ENCODE measurements at regions of chr19 and their contacts with region 1.

Region 1: GRCh38 chr19:38849860-38850435 is at the start of gene HNRNPL:
- DNase-seq: peak; percentile 100
- ATAC-seq: peak; percentile 60
- H3K4me3 ChIP-seq: peak within 1 kb of the TSS; percentile 63 to 95 (median 83)
- H3K4me3 Mint-ChIP-seq: peak within 1 kb of the TSS; percentile 92
- H3K27ac ChIP-seq: peak within 1 kb of the TSS; percentile 82 to 98
- H3K27ac Mint-ChIP-seq: peak within 1 kb of the TSS; percentile 99
- H3K4me1 ChIP-seq: peaks cover 37 to 51% of the 10 kb centered on the region in 2 donors
- H3K4me1 Mint-ChIP-seq: peaks cover 56% of the 10 kb centered on the region
- H3K27me3 ChIP-seq: no peaks in the 10 kb centered on the region
- H3K27me3 Mint-ChIP-seq: no peaks in the 10 kb centered on the region
- CTCF ChIP-seq: peak; percentile 37
- total RNA-seq, gene HNRNPL: 397 and 418 TPM in 2 replicates

Region 2: DNA sequence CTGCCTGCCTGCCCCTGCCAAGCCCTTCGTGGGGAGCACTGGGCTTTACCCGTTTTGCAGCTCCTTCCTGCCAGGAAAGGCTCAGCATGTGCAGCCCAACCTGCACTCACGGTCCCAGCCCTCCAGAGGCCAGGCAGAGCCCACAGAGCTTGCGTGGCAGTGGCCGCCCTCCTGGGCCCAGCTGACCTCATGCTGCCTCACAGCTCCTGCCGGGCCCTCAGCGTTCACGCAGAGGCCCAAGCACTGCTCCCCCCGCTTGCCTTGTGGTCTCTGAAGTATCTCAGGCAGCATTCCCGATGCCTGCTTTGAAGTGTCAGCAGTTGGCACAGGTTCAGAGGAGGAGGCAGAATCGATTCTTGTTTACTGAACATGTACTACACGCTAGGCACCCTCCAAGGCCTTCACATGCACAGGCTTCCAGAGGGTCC is 138.2 kb before region 1 on chr19:
- CTCF ChIA-PET with region 1: no interaction called
- POLR2A ChIA-PET with region 1: no interaction called
- intact Hi-C with region 1: no loop called
- DNase-seq: no peak
- ATAC-seq: no peak
- H3K4me3 ChIP-seq: no peak overlapping the region
- H3K4me3 Mint-ChIP-seq: no peak overlapping the region
- H3K27ac ChIP-seq: no peak overlapping the region
- H3K27ac Mint-ChIP-seq: no peak overlapping the region
- H3K4me1 ChIP-seq: no peaks in the 10 kb centered on the region
- H3K4me1 Mint-ChIP-seq: no peaks in the 10 kb centered on the region
- H3K27me3 ChIP-seq: no peaks in the 10 kb centered on the region
- H3K27me3 Mint-ChIP-seq: no peaks in the 10 kb centered on the region
- CTCF ChIP-seq: no peak

Region 3: DNA sequence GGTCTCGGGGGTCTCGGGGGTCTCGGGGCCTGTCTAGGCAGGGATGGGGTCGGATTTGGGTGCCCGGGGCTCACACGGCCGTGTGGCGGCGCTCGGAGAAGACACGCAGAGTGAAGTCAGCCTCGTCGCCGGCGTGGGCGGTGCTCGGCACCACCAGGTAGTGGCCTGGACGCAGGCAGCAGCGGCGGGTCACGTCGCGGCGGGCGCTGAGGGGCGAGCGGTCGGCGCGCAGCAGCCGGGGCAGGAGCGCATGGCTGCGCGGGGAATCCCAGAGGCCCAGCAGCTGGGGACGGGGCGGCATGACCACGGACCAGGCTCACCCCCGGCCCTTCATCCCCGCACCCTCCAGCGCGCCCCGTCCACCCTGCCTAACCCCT is 113.9 kb before region 1 on chr19:
- CTCF ChIA-PET with region 1: no interaction called
- POLR2A ChIA-PET with region 1: interaction called, 14 read pairs
- intact Hi-C with region 1: loop called (anchors 1 kb)
- DNase-seq: peak; percentile 87
- ATAC-seq: peak; percentile 53
- H3K4me3 ChIP-seq: peak overlapping the region in 4 of 5 experiments; percentile 32 to 69 (median 58)
- H3K4me3 Mint-ChIP-seq: peak overlapping the region; percentile 79
- H3K27ac ChIP-seq: no peak overlapping the region
- H3K27ac Mint-ChIP-seq: peak overlapping the region; percentile 76
- H3K4me1 ChIP-seq: peaks cover 29 to 47% of the 10 kb centered on the region in 2 donors
- H3K4me1 Mint-ChIP-seq: peaks cover 42% of the 10 kb centered on the region
- H3K27me3 ChIP-seq: no peaks in the 10 kb centered on the region
- H3K27me3 Mint-ChIP-seq: no peaks in the 10 kb centered on the region
- CTCF ChIP-seq: no peak

Region 4: GRCh38 chr19:38862321-38863059 is 12.5 kb after region 1 on chr19:
- CTCF ChIA-PET with region 1: interaction called, 62 read pairs
- POLR2A ChIA-PET with region 1: interaction called, 237 read pairs
- intact Hi-C with region 1: loop called (anchors 1 kb)
- DNase-seq: no peak
- ATAC-seq: no peak
- H3K4me3 ChIP-seq: no peak overlapping the region
- H3K4me3 Mint-ChIP-seq: peak overlapping the region; percentile 24
- H3K27ac ChIP-seq: peak overlapping the region; percentile 24 to 55
- H3K27ac Mint-ChIP-seq: peak overlapping the region; percentile 82
- H3K4me1 ChIP-seq: peaks cover 66 to 93% of the 10 kb centered on the region in 2 donors
- H3K4me1 Mint-ChIP-seq: peaks cover 65% of the 10 kb centered on the region
- H3K27me3 ChIP-seq: no peaks in the 10 kb centered on the region
- H3K27me3 Mint-ChIP-seq: no peaks in the 10 kb centered on the region
- CTCF ChIP-seq: no peak

Region 5: GRCh38 chr19:38877781-38878574 is 28.0 kb after region 1 on chr19 and contains the start of gene RINL:
- CTCF ChIA-PET with region 1: interaction called, 21 read pairs
- POLR2A ChIA-PET with region 1: interaction called, 24 read pairs
- intact Hi-C with region 1: no loop called
- DNase-seq: peak; percentile 85
- ATAC-seq: peak; percentile 93
- H3K4me3 ChIP-seq: peak within 1 kb of the TSS; percentile 36 to 73 (median 46)
- H3K4me3 Mint-ChIP-seq: peak within 1 kb of the TSS; percentile 94
- H3K27ac ChIP-seq: peak within 1 kb of the TSS; percentile 94 to 98
- H3K27ac Mint-ChIP-seq: peak within 1 kb of the TSS; percentile 100
- H3K4me1 ChIP-seq: peaks cover 31 to 37% of the 10 kb centered on the region in 2 donors
- H3K4me1 Mint-ChIP-seq: peaks cover 41% of the 10 kb centered on the region
- H3K27me3 ChIP-seq: no peaks in the 10 kb centered on the region
- H3K27me3 Mint-ChIP-seq: no peaks in the 10 kb centered on the region
- CTCF ChIP-seq: no peak
- total RNA-seq, gene RINL: 66.2 and 67.0 TPM in 2 replicates

Region 6: GRCh38 chr19:38899447-38900219 is 49.7 kb after region 1 on chr19 and contains the starts of genes NFKBIB and SIRT2:
- CTCF ChIA-PET with region 1: interaction called, 5 read pairs
- POLR2A ChIA-PET with region 1: interaction called, 13 read pairs
- intact Hi-C with region 1: loop called (anchors 1 kb)
- DNase-seq: peak; percentile 100
- ATAC-seq: peak; percentile 89
- H3K4me3 ChIP-seq: peak within 1 kb of the TSS; percentile 85 to 95 (median 92)
- H3K4me3 Mint-ChIP-seq: peak within 1 kb of the TSS; percentile 96
- H3K27ac ChIP-seq: peak within 1 kb of the TSS; percentile 89 to 99
- H3K27ac Mint-ChIP-seq: peak within 1 kb of the TSS; percentile 94
- H3K4me1 ChIP-seq: peaks cover 20 to 30% of the 10 kb centered on the region in 2 donors
- H3K4me1 Mint-ChIP-seq: peaks cover 38% of the 10 kb centered on the region
- H3K27me3 ChIP-seq: no peaks in the 10 kb centered on the region
- H3K27me3 Mint-ChIP-seq: no peaks in the 10 kb centered on the region
- CTCF ChIP-seq: no peak
- total RNA-seq, gene NFKBIB: 30.3 and 31.5 TPM in 2 replicates
- total RNA-seq, gene SIRT2: 41.8 and 42.4 TPM in 2 replicates

Measured in B cell (primary cell).